Spleen (tissue), 13 donors: ENCODE measurements at regions of chr20 and their contacts with region 1.

Region 1: GRCh38 chr20:2643708-2644107 is 8.7 kb upstream of the NOP56 start:
- DNase-seq: no peak
- H3K4me3 ChIP-seq: no peak overlapping the region
- H3K27ac ChIP-seq: no peak overlapping the region
- H3K4me1 ChIP-seq: peaks cover 0 to 8% (median 2%) of the 10 kb centered on the region in 6 donors
- H3K27me3 ChIP-seq: no peaks in the 10 kb centered on the region
- CTCF ChIP-seq: no peak
- POLR2A ChIP-seq: no peak

Region 2: DNA sequence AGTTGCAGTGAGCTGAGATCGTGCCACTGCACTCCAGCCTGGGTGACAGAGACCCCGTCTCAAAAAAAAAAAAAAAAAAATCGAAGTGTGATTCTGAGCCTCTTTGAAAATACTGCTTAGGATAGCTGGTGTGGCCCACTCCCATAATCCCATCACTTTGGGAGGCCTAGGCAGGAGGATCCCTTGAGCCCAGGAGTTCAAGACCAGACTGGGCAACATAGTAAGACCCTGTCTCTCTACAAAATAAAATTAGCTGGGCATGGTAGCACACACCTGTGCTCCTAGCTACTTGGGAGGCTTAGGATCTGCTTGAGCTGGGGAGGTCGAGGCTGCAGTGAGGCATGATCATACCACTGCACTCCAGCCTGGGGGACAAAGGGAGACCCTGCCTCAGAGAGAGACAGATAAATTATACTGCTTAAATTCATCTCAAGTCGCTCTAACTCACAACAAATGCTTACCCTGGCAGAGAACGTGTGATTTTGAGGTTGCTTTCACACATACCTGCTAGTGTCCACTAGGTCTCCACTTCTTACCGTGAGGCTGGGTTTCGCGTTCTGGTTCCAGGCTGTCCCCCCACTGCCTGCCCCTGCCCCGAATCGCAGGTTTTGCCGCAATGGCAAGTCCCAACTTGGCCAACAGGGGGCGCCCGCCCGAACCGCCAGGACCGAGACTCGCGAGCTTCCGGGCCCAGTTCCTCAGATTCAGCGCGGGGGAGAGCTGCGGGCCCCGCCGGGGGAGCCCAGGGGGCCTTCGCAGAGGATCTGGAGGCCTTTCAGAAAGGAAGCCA is 119.6 kb before region 1 on chr20:
- intact Hi-C with region 1: loop called (anchors 10 kb)
- DNase-seq: peak; percentile 98
- H3K4me3 ChIP-seq: peak overlapping the region; percentile 55 to 87 (median 68)
- H3K27ac ChIP-seq: peak overlapping the region; percentile 70 to 95 (median 92)
- H3K4me1 ChIP-seq: peaks cover 0 to 43% (median 19%) of the 10 kb centered on the region in 6 donors
- H3K27me3 ChIP-seq: peaks cover 0 to 11% (median 0%) of the 10 kb centered on the region in 7 donors
- CTCF ChIP-seq: peak; percentile 85 to 98 (median 96)
- POLR2A ChIP-seq: no peak

Region 3: GRCh38 chr20:2558581-2559278 is 85.0 kb before region 1 on chr20:
- intact Hi-C with region 1: no loop called
- DNase-seq: no peak
- H3K4me3 ChIP-seq: peak overlapping the region in 7 of 8 donors; percentile 11 to 64 (median 27)
- H3K27ac ChIP-seq: peak overlapping the region in 3 of 8 donors; percentile 13 to 55 (median 21)
- H3K4me1 ChIP-seq: peaks cover 3 to 17% (median 8%) of the 10 kb centered on the region in 6 donors
- H3K27me3 ChIP-seq: peaks cover 0 to 74% (median 24%) of the 10 kb centered on the region in 7 donors
- CTCF ChIP-seq: no peak
- POLR2A ChIP-seq: no peak